K562 (cell line): ENCODE measurements at regions of chr3 and their contacts with region 1.

Region 1: GRCh38 chr3:34676436-34676835 is 878.0 kb downstream of the PDCD6IP start:
- DNase-seq: no peak
- ATAC-seq: no peak
- H3K4me3 ChIP-seq: no peak overlapping the region
- H3K27ac ChIP-seq: no peak overlapping the region
- H3K4me1 ChIP-seq: peaks cover 0 to 3% of the 10 kb centered on the region in 2 experiments; a peak in 1 of 5 replicates
- H3K27me3 ChIP-seq: no peaks in the 10 kb centered on the region
- CTCF ChIP-seq: no peak
- EP300 ChIP-seq: no peak
- POLR2A ChIP-seq: no peak
- RAD21 ChIP-seq: no peak

Region 2: GRCh38 chr3:34260271-34261006 is 416.0 kb before region 1 on chr3:
- CTCF ChIA-PET with region 1: no interaction called
- POLR2A ChIA-PET with region 1: no interaction called
- in situ Hi-C with region 1: loop called (anchors 10 kb)
- intact Hi-C with region 1: no loop called
- DNase-seq: peak; percentile 45 to 60 (median 54)
- ATAC-seq: peak; percentile 89
- H3K4me3 ChIP-seq: no peak overlapping the region
- H3K27ac ChIP-seq: no peak overlapping the region
- H3K4me1 ChIP-seq: no peaks in the 10 kb centered on the region
- H3K27me3 ChIP-seq: no peaks in the 10 kb centered on the region
- CTCF ChIP-seq: peak; percentile 39 to 69 (median 62)
- EP300 ChIP-seq: no peak
- POLR2A ChIP-seq: no peak
- RAD21 ChIP-seq: peak; percentile 61 to 68

Region 3: DNA sequence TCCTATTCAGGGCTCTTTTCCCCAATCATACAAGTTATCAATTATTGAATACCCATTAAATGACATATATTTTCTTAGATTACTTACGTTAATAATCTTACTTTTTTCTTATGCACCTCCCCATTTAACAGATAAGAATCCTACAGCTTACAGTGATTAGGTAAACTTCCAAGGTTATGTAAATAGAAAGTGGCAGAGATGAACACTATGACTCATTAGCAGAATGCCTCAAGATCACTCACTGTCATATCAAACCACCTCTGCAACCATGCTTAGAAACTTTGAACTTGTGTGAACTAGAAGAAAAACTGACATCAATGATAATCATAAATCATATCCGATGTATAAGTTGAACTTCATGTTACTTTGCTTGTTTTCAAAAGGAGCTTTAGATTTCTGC is 51.2 kb after region 1 on chr3:
- CTCF ChIA-PET with region 1: no interaction called
- POLR2A ChIA-PET with region 1: no interaction called
- in situ Hi-C with region 1: no loop called
- intact Hi-C with region 1: no loop called
- DNase-seq: no peak
- ATAC-seq: no peak
- H3K4me3 ChIP-seq: no peak overlapping the region
- H3K27ac ChIP-seq: no peak overlapping the region
- H3K4me1 ChIP-seq: no peaks in the 10 kb centered on the region
- H3K27me3 ChIP-seq: no peaks in the 10 kb centered on the region
- CTCF ChIP-seq: no peak
- EP300 ChIP-seq: no peak
- POLR2A ChIP-seq: no peak
- RAD21 ChIP-seq: no peak